ENCODE measurements at regions of chr11 and their contacts with region 1.

Region 1: GRCh38 chr11:60455531-60456042 is at the start of gene MS4A1:
- DNase-seq: peak; percentile 65
- CTCF ChIP-seq: no peak

Region 2: GRCh38 chr11:59641156-59641555 is 814.4 kb before region 1 on chr11:
- in situ Hi-C with region 1: no loop called
- DNase-seq: no peak
- CTCF ChIP-seq: no peak

Region 3: GRCh38 chr11:59719556-59719955 is 736.0 kb before region 1 on chr11:
- in situ Hi-C with region 1: no loop called
- DNase-seq: no peak
- CTCF ChIP-seq: no peak

Region 4: GRCh38 chr11:59810189-59810910 is 645.2 kb before region 1 on chr11 and contains the start of gene MRPL16:
- in situ Hi-C with region 1: loop called (anchors 25 kb)
- DNase-seq: peak; percentile 89
- CTCF ChIP-seq: no peak

Region 5: GRCh38 chr11:60396799-60397198 is 58.8 kb before region 1 on chr11:
- in situ Hi-C with region 1: loop called (anchors 10 kb)
- DNase-seq: peak; percentile 19
- CTCF ChIP-seq: no peak

Region 6: GRCh38 chr11:60657888-60658287 is 202.3 kb after region 1 on chr11:
- in situ Hi-C with region 1: no loop called
- DNase-seq: no peak
- CTCF ChIP-seq: no peak